HepG2 (cell line): ENCODE measurements at regions of chr5 and their contacts with region 1.

Region 1: DNA sequence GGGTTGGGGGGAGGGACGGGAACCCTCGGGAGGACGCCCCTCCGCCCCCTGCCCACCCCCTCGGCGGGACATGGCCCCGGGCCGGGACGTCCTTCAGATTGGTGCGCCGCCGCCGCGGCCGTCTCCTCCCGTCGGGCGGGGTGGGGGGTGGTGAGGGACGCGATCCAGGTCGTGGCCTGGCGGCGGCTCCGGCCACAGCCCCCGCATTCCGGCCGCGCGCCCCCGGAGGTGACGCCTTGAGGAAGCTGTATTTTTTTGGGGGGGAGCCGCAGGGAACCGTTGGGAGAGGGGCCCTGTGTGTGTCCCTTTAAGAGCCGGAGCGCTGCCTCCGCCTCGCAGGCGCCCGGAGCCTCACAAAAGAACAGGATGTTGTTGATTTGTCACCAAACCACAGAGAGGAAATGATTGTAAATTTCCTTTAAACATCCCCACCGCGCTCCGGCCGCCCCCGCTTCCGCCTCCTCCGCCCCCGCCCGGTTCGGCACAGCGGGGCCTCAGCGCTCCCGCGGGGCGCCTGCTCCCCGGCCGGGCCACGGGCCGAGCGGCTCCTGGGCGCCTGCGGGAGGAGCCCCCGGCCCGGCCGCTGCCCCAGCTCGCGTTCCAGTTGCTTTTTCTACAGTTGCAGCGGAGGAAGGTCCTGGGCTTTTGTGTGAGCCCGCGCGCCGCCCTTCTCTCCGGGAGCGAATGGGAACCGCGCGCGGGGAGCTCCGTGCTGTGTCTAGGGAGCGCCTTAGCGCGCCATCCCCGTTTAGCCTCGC is 32.1 kb upstream of the SPRY4 start:
- DNase-seq: peak; percentile 94
- ATAC-seq: peak; percentile 64
- H3K4me3 ChIP-seq: peak overlapping the region; percentile 54 to 69 (median 63)
- H3K27ac ChIP-seq: peak overlapping the region; percentile 94
- H3K4me1 ChIP-seq: peaks cover 81% of the 10 kb centered on the region
- H3K27me3 ChIP-seq: no peaks in the 10 kb centered on the region; a peak in 1 of 5 replicates
- CTCF ChIP-seq: 0 out of 2 replicates have a peak, but pooled peaks have one; percentile 3
- EP300 ChIP-seq: peak; percentile 28 to 71; a peak in 3 of 4 replicates
- POLR2A ChIP-seq: peak; percentile 48 to 66; a peak in 2 of 4 replicates
- RAD21 ChIP-seq: peak; percentile 33; the same call in 1 of the 2 replicates

Region 2: DNA sequence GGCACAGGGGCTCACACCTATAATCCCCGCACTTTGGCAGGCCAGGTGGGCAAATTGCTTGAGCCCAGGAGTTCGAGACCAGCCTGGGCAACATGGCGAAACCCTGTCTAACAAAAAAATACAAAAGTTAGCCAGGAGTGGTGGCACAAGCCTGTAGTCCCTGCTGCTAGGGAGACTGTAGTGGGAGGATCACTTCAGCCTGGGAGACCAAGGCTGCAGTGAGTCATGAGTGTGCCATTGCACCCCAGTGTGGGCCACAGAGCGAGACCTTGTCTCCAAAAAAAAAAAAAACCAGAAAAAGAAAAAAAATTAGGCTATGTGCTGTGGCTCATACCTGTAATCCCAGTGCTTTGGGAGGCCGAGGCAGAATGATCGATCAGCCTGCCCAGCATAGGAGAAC is 1868.0 kb before region 1 on chr5:
- CTCF ChIA-PET with region 1: no interaction called
- POLR2A ChIA-PET with region 1: no interaction called
- in situ Hi-C with region 1: no loop called
- intact Hi-C with region 1: no loop called
- DNase-seq: no peak
- ATAC-seq: peak; percentile 56; the same call in 2 of the 3 replicates
- H3K4me3 ChIP-seq: no peak overlapping the region
- H3K27ac ChIP-seq: no peak overlapping the region
- H3K4me1 ChIP-seq: no peaks in the 10 kb centered on the region
- H3K27me3 ChIP-seq: no peaks in the 10 kb centered on the region
- CTCF ChIP-seq: no peak
- EP300 ChIP-seq: no peak
- POLR2A ChIP-seq: no peak
- RAD21 ChIP-seq: no peak

Region 3: DNA sequence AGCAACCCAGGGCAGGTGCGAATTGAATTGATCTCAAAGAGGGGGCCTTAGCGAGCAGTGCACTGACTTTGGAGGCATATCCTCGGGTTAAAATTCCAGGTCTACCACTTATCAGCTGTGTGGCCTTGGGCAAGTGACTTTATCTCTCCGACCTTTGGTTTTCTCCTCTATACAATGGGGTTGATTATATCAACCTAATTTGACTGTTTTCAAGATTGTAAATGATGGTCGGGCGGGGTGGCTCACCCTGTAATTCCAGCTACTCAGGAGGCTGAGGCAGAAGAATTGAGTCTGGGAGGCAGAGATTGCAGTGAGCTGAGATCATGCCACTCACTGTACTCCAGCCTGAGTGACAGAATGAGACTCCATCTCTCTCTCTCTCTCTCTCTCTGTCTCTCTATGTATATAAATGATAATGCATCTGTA is 50.8 kb before region 1 on chr5:
- CTCF ChIA-PET with region 1: no interaction called
- POLR2A ChIA-PET with region 1: interaction called, 3 read pairs
- in situ Hi-C with region 1: no loop called
- intact Hi-C with region 1: loop called (anchors 1 kb)
- DNase-seq: peak; percentile 77
- ATAC-seq: peak; percentile 79
- H3K4me3 ChIP-seq: no peak overlapping the region
- H3K27ac ChIP-seq: peak overlapping the region; percentile 21
- H3K4me1 ChIP-seq: peaks cover 37% of the 10 kb centered on the region
- H3K27me3 ChIP-seq: no peaks in the 10 kb centered on the region
- CTCF ChIP-seq: no peak
- EP300 ChIP-seq: peak in 1 of 2 experiments; percentile 68; a peak in 1 of 4 replicates
- POLR2A ChIP-seq: no peak
- RAD21 ChIP-seq: no peak

Region 4: DNA sequence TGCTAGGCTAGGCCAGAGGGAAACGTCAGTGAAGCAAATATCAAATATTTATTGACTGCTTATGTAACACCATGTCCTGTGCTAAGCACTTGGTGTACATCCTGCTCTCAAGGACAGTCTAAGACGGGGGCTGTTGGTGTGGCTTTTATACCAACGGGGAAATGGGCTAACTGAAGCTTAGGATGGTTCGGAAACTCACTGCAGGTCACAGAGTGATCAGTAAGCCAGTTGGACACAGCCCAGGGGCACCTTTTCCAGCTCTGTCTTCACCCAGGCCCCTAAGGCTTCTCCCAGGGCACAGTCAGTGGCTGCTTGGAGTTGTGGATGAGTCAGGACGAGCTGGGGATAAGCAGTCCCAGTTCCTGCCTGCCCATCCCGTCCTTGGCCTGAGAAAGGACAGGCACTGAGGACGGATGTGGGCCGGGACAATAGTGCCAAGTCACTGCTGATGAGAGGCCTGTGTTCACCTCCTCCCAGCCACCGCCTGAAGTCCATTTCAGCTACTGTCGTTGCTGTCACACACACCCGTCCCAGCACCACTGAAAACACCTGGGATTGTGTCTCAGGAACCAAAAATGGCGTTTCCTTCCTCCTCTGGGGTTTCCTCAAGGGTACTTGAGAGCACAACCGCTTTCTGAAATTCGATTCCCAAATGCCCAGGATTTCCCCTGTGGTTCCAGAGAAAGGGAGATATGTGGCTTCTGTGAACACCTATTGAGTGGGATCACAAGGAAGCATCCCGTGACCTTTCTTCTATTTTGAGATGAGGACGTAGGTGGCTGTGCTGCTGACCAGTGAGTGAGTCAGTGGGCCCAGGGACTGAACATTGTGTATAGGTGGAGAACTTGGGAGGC is 14.5 kb before region 1 on chr5:
- CTCF ChIA-PET with region 1: no interaction called
- POLR2A ChIA-PET with region 1: interaction called, 31 read pairs
- in situ Hi-C with region 1: no loop called
- intact Hi-C with region 1: no loop called
- DNase-seq: peak; percentile 82
- ATAC-seq: peak; percentile 97
- H3K4me3 ChIP-seq: peak overlapping the region; percentile 10 to 54 (median 39); a peak in 4 of 6 replicates
- H3K27ac ChIP-seq: peak overlapping the region; percentile 84
- H3K4me1 ChIP-seq: peaks cover 39% of the 10 kb centered on the region
- H3K27me3 ChIP-seq: no peaks in the 10 kb centered on the region
- CTCF ChIP-seq: no peak
- EP300 ChIP-seq: no peak
- POLR2A ChIP-seq: peak; percentile 48 to 63; a peak in 2 of 4 replicates
- RAD21 ChIP-seq: no peak

Region 5: DNA sequence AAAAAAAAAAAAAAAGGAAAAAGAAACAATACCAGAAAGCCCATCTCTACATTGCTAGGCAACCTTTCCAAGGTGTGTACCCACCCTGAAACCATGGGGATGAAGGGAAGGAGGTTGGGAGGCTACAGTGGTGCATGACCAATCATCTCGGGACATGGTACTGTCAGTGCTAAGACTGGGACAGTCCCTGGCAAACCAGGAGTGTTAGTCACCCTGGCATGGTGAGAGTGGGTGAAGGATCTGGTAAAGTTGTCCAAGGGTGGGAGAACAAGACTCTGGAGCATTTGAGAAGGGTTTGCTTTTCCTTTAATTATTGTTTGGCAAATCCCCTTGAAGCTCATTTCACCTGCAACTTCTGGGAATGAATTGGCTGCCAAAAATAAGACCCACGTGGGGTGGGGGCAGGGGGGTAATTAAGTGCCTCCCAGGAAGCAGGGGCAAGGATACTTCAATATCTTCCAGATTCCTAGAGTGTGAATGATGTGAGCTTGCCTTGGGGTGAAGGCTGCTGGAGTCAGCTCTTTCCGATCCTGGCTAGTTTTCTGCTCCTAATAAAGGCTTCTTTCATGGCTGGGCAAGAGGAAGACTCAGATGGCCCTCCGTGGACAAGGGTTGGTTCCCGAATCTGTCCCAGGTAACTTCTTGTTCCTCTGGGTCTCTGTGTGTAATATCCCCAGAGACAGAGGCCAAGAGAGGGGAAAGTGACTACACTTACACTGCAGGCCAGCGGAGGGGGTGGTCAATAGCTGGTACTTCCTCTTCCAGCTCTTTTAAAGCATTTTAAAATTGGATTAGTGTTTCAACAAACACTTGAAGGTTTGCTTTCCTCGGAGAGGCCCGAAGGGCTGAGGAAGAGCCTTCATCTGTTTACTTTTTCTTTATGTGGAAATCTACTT is 29.5 kb after region 1 on chr5:
- CTCF ChIA-PET with region 1: no interaction called
- POLR2A ChIA-PET with region 1: interaction called, 17 read pairs
- in situ Hi-C with region 1: no loop called
- intact Hi-C with region 1: no loop called
- DNase-seq: peak; percentile 24
- ATAC-seq: peak; percentile 83
- H3K4me3 ChIP-seq: peak overlapping the region in 2 of 3 experiments; percentile 12 to 38; a peak in 2 of 6 replicates
- H3K27ac ChIP-seq: peak overlapping the region; percentile 46
- H3K4me1 ChIP-seq: peaks cover 51% of the 10 kb centered on the region
- H3K27me3 ChIP-seq: no peaks in the 10 kb centered on the region
- CTCF ChIP-seq: 0 out of 2 replicates have a peak, but pooled peaks have one; percentile 13
- EP300 ChIP-seq: no peak
- POLR2A ChIP-seq: no peak
- RAD21 ChIP-seq: no peak

Region 6: GRCh38 chr5:142396436-142397038 is 39.6 kb after region 1 on chr5:
- CTCF ChIA-PET with region 1: no interaction called
- POLR2A ChIA-PET with region 1: no interaction called
- in situ Hi-C with region 1: no loop called
- intact Hi-C with region 1: no loop called
- DNase-seq: no peak
- ATAC-seq: no peak
- H3K4me3 ChIP-seq: no peak overlapping the region
- H3K27ac ChIP-seq: no peak overlapping the region
- H3K4me1 ChIP-seq: peaks cover 39% of the 10 kb centered on the region
- H3K27me3 ChIP-seq: no peaks in the 10 kb centered on the region
- CTCF ChIP-seq: no peak
- EP300 ChIP-seq: no peak
- POLR2A ChIP-seq: no peak
- RAD21 ChIP-seq: no peak